PC-9 (cell line): ENCODE measurements at regions of chr22 and their contacts with region 1.

Region 1: DNA sequence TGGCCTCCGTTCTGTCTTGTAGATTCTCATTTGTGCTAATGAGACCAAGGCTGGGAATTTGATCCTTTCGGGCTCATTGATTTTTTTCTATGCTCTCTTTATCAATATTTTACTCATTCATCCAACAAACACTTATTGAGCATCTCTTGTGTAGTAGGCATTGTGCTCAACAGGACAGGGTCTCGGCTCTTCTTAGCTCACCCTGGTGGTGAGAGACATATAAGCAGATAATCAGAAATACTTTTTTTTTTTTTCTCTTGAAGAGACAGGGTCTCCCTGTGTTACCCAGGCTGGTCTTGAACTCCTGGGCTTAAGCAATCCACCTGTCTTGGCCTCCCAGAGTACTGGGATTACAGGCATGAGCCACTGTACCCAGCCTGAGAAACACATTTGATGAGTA is 48.0 kb upstream of the SLC5A1 start:
- DNase-seq: no peak
- H3K4me3 ChIP-seq: no peak overlapping the region
- H3K27ac ChIP-seq: no peak overlapping the region
- H3K4me1 ChIP-seq: peaks cover under 1% of the 10 kb centered on the region; the same call in 1 of the 2 replicates
- H3K27me3 ChIP-seq: peaks cover 11% of the 10 kb centered on the region; the same call in 1 of the 2 replicates
- CTCF ChIP-seq: peak; percentile 38; the same call in 1 of the 2 replicates

Region 2: DNA sequence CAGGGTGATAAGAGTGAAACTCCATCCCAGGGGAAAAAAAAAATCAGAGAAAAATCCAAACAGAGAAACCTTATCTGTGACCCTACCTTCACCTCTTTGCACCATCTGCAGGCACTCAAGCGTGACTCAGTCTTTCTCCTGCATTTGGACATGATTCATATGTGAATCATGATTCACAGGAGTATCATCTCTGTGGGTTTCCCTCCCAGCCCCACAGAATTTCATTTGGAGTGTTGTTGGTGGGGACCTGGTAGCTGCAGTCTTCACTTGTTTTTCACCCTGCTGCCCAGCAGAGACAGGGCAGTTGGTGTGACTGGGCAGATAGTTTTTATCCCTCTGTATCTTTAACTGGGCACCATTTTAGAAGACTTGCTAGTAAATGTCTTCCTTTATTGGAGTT is 165.5 kb before region 1 on chr22:
- CTCF ChIA-PET with region 1: no interaction called
- POLR2A ChIA-PET with region 1: no interaction called
- intact Hi-C with region 1: no loop called
- DNase-seq: peak; percentile 72 to 94
- H3K4me3 ChIP-seq: no peak overlapping the region
- H3K27ac ChIP-seq: peak overlapping the region; percentile 92
- H3K4me1 ChIP-seq: peaks cover 24% of the 10 kb centered on the region
- H3K27me3 ChIP-seq: no peaks in the 10 kb centered on the region
- CTCF ChIP-seq: no peak

Region 3: DNA sequence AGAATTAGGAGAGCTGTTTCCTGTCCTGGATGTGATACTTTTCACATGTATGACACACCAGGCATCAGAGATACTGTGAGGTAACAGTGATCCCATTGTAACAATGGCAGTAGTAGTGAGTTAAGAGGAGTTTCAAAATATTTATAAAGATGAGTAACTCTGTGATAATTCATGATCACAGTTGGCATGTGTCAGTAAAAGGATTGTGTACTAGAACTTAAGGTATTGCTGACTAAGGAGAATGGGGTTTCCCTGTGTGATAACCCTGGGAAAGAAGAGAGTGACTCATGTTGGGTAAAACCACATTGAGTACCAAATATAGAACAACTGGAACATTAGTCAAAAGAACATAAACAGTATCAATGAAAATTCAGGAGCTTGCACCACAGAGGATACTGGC is 25.1 kb after region 1 on chr22:
- CTCF ChIA-PET with region 1: no interaction called
- POLR2A ChIA-PET with region 1: no interaction called
- intact Hi-C with region 1: loop called (anchors 2 kb)
- DNase-seq: peak in 1 of 2 experiments; percentile 93
- H3K4me3 ChIP-seq: no peak overlapping the region
- H3K27ac ChIP-seq: peak overlapping the region; percentile 41; the same call in 1 of the 2 replicates
- H3K4me1 ChIP-seq: peaks cover 26% of the 10 kb centered on the region
- H3K27me3 ChIP-seq: no peaks in the 10 kb centered on the region
- CTCF ChIP-seq: no peak